CD8-positive, alpha-beta memory T cell (primary cell): ENCODE measurements at regions of chr6 and their contacts with region 1.

Region 1: DNA sequence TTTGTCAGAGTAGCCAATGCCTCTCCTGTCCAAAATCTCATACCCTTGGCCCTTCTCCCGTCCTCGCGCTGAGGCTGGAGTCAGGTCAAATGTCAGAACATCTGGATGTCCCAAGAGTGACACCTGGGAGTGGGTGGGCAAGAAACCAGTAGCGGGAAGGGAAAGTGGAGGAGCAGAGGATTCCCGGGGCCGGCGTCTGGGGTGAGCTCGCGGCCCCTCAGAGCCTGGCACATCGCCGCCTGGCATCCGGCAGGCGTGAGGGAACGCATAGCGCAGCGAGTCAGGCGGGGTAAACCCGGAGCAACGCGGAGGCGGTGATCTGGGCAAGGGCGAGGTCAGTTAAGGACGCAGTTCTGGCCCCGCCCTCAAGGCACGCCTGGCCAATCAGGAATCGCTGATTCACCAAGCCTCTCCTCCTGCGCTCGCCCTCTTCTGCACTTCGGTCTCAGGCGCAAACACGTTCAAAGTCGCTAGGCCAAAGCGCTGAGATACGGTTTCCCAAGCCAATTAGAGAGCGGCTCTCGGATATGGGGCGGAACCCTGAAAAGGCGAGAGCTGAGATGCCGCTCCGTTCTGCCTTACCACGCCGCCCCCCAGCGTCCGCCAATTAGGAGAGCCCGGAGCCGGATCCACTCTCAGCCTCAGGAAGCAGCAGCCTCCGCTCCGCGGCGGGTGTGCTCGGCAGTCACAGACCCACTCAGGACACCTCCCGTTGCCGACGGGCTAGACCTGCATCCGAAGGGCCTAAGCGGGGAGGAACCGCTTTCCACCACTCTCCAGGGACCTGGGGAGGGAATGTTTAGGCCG is 22.5 kb downstream of the VPS52 start:
- DNase-seq: peak; percentile 95 to 98 (median 96)
- H3K4me3 ChIP-seq: peak overlapping the region; percentile 74
- H3K4me3 Mint-ChIP-seq: peak overlapping the region; percentile 82 to 96 (median 89)
- H3K27ac ChIP-seq: peak overlapping the region; percentile 90
- H3K27ac Mint-ChIP-seq: peak overlapping the region; percentile 95 to 99 (median 98)
- H3K4me1 ChIP-seq: peaks cover 24% of the 10 kb centered on the region
- H3K4me1 Mint-ChIP-seq: peaks cover 32 to 42% (median 38%) of the 10 kb centered on the region in 3 donors
- H3K27me3 ChIP-seq: no peaks in the 10 kb centered on the region
- H3K27me3 Mint-ChIP-seq: peaks cover 2 to 4% of the 10 kb centered on the region in 2 donors

Region 2: DNA sequence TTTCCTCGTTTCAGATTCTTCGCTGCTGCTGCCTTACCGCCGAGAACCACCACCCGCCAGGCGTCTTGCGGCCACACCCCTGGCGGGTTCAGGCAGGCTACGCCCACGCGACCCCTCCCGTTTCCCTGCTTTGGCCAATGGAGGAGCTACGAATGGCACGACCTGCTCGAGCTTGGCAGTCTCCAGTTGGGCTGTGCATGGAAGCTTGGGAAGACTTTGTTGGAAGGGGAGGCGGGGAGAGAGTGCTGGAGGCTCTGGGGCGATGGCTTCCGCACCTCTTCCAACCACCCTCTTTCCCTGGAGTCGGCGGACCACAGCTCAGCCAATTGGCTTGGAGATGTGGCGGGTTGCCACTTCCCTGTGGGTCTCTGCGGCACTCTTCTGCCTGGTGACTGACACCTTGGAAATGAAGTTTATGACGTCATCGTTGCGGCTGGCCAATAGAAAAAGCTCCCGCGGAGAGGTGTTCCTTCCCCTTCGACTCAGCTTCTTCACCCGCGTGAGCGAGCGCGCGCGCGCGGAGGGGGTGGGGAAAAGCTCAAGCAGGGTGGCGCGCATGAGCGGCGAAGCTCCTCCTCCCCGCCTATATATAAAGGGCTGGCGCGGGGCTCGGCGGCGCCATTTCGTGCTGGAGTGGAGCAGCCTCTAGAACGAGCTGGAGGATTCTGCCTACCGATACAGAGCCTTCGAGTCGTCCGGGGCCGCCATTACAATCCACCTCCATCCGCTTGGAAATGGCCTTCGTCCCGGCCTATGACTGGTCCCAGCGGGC is 277.4 kb before region 1 on chr6:
- CTCF ChIA-PET with region 1: interaction called, 5 read pairs
- POLR2A ChIA-PET with region 1: interaction called, 10 read pairs
- DNase-seq: peak; percentile 99 to 100 (median 100)
- H3K4me3 ChIP-seq: peak overlapping the region; percentile 96
- H3K4me3 Mint-ChIP-seq: peak overlapping the region; percentile 96 to 100 (median 97)
- H3K27ac ChIP-seq: peak overlapping the region; percentile 97
- H3K27ac Mint-ChIP-seq: peak overlapping the region; percentile 96 to 100 (median 99)
- H3K4me1 ChIP-seq: peaks cover 33% of the 10 kb centered on the region
- H3K4me1 Mint-ChIP-seq: peaks cover 37 to 50% (median 41%) of the 10 kb centered on the region in 3 donors
- H3K27me3 ChIP-seq: no peaks in the 10 kb centered on the region
- H3K27me3 Mint-ChIP-seq: peaks cover 0 to 19% of the 10 kb centered on the region in 2 donors

Region 3: GRCh38 chr6:33061987-33062386 is 187.1 kb before region 1 on chr6:
- CTCF ChIA-PET with region 1: no interaction called
- POLR2A ChIA-PET with region 1: no interaction called
- DNase-seq: no peak
- H3K4me3 ChIP-seq: no peak overlapping the region
- H3K4me3 Mint-ChIP-seq: no peak overlapping the region
- H3K27ac ChIP-seq: no peak overlapping the region
- H3K27ac Mint-ChIP-seq: no peak overlapping the region
- H3K4me1 ChIP-seq: no peaks in the 10 kb centered on the region
- H3K4me1 Mint-ChIP-seq: peaks cover 0 to 8% (median 4%) of the 10 kb centered on the region in 3 donors
- H3K27me3 ChIP-seq: no peaks in the 10 kb centered on the region
- H3K27me3 Mint-ChIP-seq: peaks cover 2 to 7% of the 10 kb centered on the region in 2 donors

Region 4: DNA sequence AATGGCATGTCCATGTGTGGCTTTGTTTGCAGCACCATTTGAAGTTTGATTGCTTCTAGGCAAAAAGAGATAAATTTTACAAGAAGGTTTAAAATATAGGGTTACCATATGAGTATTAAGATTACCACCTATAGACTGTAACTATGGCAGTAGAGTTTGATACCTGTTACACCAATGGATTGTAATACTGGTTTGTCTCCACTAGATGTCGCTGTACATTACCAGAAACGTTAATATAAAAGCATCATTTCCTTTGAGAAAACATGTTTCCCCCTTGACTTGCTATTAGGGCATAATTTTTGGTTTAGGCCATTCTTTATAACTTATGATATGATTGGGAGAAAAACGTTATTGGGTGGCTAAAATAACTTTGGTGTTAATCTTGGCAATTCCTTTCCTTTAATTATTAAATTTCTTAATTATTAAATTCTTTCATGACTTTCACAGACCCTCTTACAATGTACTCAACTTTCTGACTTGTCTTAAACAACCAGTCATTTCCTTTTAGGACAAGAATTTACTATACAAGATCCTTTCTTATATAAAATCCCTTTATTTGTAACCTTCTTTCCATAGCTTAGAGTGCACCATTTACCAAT is 130.5 kb before region 1 on chr6:
- CTCF ChIA-PET with region 1: interaction called, 26 read pairs
- POLR2A ChIA-PET with region 1: no interaction called
- DNase-seq: peak in 2 of 5 donors; percentile 58 to 60
- H3K4me3 ChIP-seq: no peak overlapping the region
- H3K4me3 Mint-ChIP-seq: peak overlapping the region in 1 of 7 donors; percentile 56
- H3K27ac ChIP-seq: no peak overlapping the region
- H3K27ac Mint-ChIP-seq: no peak overlapping the region
- H3K4me1 ChIP-seq: no peaks in the 10 kb centered on the region
- H3K4me1 Mint-ChIP-seq: peaks cover 10 to 21% (median 19%) of the 10 kb centered on the region in 3 donors
- H3K27me3 ChIP-seq: peaks cover 27% of the 10 kb centered on the region
- H3K27me3 Mint-ChIP-seq: peaks cover 33 to 71% of the 10 kb centered on the region in 2 donors

Region 5: DNA sequence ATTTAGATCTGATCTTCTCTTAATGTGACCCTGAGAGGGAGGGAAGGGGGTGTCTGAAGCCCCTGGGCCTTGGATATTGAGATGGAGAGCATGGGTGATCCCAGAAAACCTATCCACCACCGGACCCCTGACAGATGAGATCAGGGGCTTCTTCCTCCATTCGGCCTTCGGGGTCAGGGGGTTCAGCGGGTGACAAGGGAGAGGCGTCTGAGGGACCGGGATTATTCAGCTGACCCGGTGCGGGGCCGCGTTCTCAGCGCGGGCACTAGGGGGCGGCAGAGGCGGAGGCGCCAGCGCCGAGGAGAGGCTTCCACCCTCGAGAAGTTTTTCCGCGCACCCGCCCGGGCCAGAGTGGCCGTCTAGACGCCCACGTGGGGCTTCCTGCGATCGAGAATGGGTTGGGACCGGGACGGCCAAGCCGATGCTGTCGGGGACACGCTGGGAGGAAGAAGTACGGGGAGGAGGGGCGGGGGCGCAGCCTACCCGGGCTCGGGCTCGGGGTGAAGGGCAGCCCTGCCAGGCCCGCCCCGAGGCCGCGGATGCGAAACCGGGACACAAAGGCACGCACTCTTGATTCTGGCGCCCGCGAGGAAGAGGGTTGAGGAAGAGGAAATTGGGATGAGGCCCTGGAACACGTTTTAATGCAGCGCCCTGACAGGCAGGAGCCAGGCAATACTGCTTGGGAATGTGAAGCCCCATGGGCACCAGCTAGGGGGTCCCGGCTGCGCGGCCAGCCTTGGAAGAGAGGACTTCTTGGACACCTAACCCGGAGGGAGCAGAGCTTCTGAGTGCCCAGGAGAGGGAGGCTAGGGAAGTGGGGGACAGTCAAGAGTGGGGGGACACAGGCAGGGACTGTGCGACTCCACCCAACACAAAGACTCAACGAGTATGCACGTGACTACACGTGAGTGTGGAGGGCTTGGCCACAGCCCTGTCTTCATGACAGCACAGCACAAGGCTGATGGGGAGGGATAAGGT is 87.5 kb before region 1 on chr6:
- CTCF ChIA-PET with region 1: interaction called, 101 read pairs
- POLR2A ChIA-PET with region 1: interaction called, 13 read pairs
- DNase-seq: peak; percentile 75 to 85 (median 77)
- H3K4me3 ChIP-seq: peak overlapping the region; percentile 55
- H3K4me3 Mint-ChIP-seq: peak overlapping the region; percentile 71 to 97 (median 83)
- H3K27ac ChIP-seq: no peak overlapping the region
- H3K27ac Mint-ChIP-seq: peak overlapping the region in 7 of 8 donors; percentile 17 to 90 (median 69)
- H3K4me1 ChIP-seq: peaks cover 11% of the 10 kb centered on the region
- H3K4me1 Mint-ChIP-seq: peaks cover 8 to 11% (median 11%) of the 10 kb centered on the region in 3 donors
- H3K27me3 ChIP-seq: peaks cover 3% of the 10 kb centered on the region
- H3K27me3 Mint-ChIP-seq: peaks cover 3 to 19% of the 10 kb centered on the region in 2 donors

Region 6: DNA sequence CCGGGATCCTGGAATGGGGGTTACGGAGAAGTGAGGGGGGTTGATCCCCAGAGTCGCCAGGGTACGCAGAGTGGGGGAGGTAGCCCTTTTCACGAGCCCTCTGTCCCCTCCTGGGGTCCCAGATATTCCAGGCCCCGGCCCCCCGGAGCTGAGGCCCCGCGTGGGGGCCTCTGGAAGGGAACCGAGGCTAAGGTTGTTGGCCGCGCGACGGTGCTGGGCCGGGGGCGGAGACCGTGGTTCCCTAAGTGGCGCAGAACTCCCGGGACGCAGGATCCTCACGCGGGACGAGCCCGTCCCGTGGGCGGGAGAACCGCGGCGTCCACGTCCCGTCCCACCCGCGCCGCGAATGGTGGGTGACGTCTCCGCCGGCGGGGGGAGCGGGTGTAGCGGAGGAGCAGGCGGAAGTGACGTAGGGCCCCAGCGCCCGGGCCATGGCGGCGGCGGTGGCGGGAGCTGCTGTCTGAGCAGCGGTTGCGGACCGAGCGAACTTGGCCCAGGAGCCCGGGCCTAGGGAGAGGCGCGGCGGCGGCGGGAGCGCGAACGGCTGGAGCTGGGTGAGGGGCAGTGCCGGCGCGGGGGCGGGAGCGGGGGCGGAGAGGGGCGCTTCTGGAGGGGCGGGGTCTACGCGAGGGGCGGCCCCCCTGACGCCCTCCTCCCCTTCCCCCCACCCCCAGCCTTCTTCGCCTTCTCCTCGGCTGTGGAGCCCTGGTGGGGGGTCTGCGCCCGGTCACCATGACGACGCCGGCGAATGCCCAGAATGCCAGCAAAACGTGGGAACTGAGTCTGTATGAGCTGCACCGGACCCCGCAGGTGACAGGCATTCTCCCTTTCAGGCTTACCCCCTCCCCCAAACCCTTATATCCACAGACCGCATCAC is 40.8 kb before region 1 on chr6 and contains the start of gene RING1:
- CTCF ChIA-PET with region 1: interaction called, 11 read pairs
- POLR2A ChIA-PET with region 1: interaction called, 12 read pairs
- DNase-seq: peak; percentile 86 to 92 (median 87)
- H3K4me3 ChIP-seq: peak within 1 kb of the TSS; percentile 77
- H3K4me3 Mint-ChIP-seq: peak within 1 kb of the TSS; percentile 81 to 95 (median 90)
- H3K27ac ChIP-seq: peak within 1 kb of the TSS; percentile 95
- H3K27ac Mint-ChIP-seq: peak within 1 kb of the TSS; percentile 85 to 99 (median 97)
- H3K4me1 ChIP-seq: peaks cover 48% of the 10 kb centered on the region
- H3K4me1 Mint-ChIP-seq: peaks cover 46 to 57% (median 49%) of the 10 kb centered on the region in 3 donors
- H3K27me3 ChIP-seq: no peaks in the 10 kb centered on the region
- H3K27me3 Mint-ChIP-seq: peaks cover 4 to 9% of the 10 kb centered on the region in 2 donors
- total RNA-seq, gene RING1: 43.1 to 47.0 TPM

Region 7: GRCh38 chr6:33264015-33264414 is 14.9 kb after region 1 on chr6:
- CTCF ChIA-PET with region 1: interaction called, 33 read pairs
- POLR2A ChIA-PET with region 1: interaction called, 3 read pairs
- DNase-seq: no peak
- H3K4me3 ChIP-seq: no peak overlapping the region
- H3K4me3 Mint-ChIP-seq: no peak overlapping the region
- H3K27ac ChIP-seq: no peak overlapping the region
- H3K27ac Mint-ChIP-seq: peak overlapping the region in 1 of 8 donors; percentile 68
- H3K4me1 ChIP-seq: no peaks in the 10 kb centered on the region
- H3K4me1 Mint-ChIP-seq: peaks cover 0 to 8% (median 4%) of the 10 kb centered on the region in 3 donors
- H3K27me3 ChIP-seq: no peaks in the 10 kb centered on the region
- H3K27me3 Mint-ChIP-seq: no peaks in the 10 kb centered on the region

Region 8: DNA sequence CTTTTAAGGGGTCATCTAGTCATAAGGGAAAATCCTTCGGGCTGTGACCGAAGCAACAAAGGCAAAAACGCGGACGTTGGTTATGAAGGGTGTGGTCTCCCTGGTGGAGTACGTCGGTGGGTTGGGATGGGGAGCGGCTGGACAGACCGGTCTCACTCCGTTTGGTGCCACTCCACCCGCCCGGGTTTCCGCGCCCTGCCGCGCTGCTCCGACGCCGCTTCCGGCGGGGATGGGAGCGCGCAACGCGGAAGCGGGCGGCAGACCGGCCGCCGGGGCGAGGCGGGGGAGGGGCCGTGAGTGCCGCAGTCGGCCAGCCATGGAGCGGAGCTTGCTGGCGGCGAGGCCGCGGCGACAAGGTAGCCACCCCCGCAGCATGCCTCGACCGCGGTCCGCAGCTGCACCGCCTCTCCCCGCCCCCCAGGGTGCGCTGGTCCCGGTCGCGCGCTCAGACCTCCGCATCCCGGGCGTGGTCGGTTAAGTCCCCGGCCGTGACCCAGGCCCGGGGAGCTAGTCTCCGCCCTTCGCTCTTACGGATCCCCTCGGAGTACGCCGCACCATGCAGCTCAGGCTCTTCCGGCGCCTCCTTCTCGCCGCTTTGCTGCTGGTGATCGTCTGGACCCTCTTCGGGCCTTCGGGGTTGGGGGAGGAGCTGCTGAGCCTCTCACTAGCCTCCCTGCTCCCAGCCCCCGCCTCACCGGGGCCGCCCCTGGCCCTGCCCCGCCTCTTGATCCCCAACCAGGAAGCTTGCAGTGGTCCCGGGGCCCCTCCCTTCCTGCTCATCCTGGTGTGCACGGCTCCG is 27.9 kb after region 1 on chr6 and contains the start of gene B3GALT4:
- CTCF ChIA-PET with region 1: interaction called, 33 read pairs
- POLR2A ChIA-PET with region 1: interaction called, 26 read pairs
- DNase-seq: peak; percentile 58 to 79 (median 73)
- H3K4me3 ChIP-seq: peak within 1 kb of the TSS; percentile 80
- H3K4me3 Mint-ChIP-seq: peak within 1 kb of the TSS; percentile 88 to 98 (median 89)
- H3K27ac ChIP-seq: peak within 1 kb of the TSS; percentile 68
- H3K27ac Mint-ChIP-seq: peak within 1 kb of the TSS; percentile 90 to 99 (median 94)
- H3K4me1 ChIP-seq: peaks cover 57% of the 10 kb centered on the region
- H3K4me1 Mint-ChIP-seq: peaks cover 61 to 92% (median 79%) of the 10 kb centered on the region in 3 donors
- H3K27me3 ChIP-seq: no peaks in the 10 kb centered on the region
- H3K27me3 Mint-ChIP-seq: no peaks in the 10 kb centered on the region
- total RNA-seq, gene B3GALT4: 6.1 to 7.0 TPM